ENCODE measurements at regions of chr1 and their contacts with region 1.

Region 1: DNA sequence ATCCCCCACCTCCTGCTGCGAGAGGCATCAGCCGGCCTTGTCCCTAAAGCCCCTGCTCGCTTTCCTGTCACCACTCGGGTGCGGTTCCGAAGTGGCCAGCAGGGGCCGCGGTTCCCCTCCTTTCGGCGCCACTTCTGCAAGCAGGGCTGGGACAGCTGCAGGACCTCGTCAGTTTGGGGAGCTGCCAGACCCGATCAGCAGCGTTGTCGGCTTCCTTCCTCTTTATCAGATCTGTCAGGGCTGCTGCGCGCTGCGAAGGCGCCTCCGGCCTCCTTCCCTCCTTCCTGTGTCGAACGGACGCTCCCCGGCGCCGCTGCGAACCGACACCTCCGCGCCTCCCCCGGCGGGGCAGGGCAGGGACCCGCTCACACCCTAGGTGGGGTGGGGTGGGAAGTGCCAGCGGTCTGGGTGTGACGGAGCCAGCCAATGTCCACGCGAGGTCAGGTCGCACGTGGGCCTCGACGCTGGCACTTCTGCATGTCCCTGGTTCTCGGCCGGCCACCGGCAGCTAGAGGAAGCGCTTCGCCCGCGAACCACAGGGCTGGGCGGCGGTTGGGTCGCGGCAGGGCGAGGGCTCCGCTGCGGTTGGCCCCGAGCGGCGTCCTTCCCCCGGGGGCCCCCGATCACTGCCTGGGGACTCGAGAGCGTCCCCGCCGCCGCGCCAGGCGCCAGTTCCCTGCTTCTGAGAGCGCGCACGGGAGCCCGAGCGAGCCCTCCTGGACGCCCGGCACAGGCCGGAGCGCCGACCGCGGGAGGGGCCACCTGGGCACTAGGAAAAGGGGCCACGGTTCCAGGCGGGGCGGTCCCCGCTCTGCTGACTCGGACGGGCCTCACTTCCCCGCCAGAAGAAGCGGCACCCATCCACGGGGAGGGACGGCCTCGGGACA is 81.8 kb downstream of the RUNX3 start:
- DNase-seq: peak; percentile 71
- ATAC-seq: peak; percentile 97
- H3K4me3 ChIP-seq: peak overlapping the region; percentile 56; the same call in 1 of the 2 replicates
- H3K27ac ChIP-seq: no peak overlapping the region
- H3K4me1 ChIP-seq: no peaks in the 10 kb centered on the region
- H3K27me3 ChIP-seq: no peaks in the 10 kb centered on the region
- CTCF ChIP-seq: peak; percentile 93 to 99 (median 98)
- EP300 ChIP-seq: no peak
- POLR2A ChIP-seq: peak; percentile 84
- RAD21 ChIP-seq: peak; percentile 93

Region 2: DNA sequence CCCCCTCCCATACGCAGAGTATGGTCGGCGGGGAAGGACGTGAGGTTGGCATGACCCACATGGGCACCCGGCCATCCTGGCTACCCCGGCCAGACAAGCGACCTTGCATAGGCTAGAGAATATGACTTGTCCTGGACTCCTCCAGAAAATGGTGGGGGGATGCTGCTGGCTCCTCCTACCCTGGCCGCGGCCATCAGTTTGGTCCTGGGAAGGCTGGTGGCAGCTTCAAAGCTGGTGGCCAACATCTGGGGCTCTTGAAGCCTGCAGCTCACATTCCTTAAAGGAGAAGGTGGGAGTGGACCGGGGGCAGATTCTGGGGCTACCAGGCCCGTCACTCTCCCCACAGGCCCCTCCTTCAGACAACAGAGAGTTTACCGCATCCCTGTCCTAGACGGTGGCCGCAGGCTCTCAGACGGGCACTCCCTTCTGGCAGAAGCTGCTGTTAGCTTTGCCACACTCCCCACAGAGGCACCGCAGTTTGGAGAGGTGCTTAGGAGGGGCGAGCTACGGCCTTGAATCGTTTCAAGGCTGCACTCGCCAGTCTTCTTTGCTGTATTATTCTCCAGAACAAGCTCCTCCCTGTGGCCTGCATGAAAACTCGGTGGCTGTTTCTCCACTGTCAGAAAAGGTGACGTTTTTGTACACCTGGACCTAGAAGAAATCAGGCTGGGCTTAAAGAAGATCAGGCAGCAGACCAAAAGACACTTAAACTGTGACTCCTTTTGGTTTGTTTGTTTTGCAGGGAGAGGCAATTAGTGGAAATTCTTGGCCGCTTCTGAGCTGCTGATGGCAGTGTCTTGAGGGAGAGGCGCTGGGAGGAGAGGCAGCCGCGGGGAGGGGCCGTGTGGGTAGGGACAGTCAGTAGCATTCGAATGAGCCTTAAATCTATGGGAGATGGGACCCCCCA is 13.8 kb after region 1 on chr1:
- CTCF ChIA-PET with region 1: interaction called, 15 read pairs
- POLR2A ChIA-PET with region 1: interaction called, 4 read pairs
- RAD21 ChIA-PET with region 1: interaction called, 5 read pairs
- SMC1A ChIA-PET with region 1: interaction called, 13 read pairs
- in situ Hi-C with region 1: no loop called
- intact Hi-C with region 1: no loop called
- DNase-seq: no peak
- ATAC-seq: no peak
- H3K4me3 ChIP-seq: no peak overlapping the region
- H3K27ac ChIP-seq: no peak overlapping the region
- H3K4me1 ChIP-seq: peaks cover 5% of the 10 kb centered on the region
- H3K27me3 ChIP-seq: peaks cover 0 to 3% of the 10 kb centered on the region in 2 experiments; a peak in 2 of 4 replicates
- CTCF ChIP-seq: no peak
- EP300 ChIP-seq: no peak
- POLR2A ChIP-seq: no peak
- RAD21 ChIP-seq: no peak

Region 3: GRCh38 chr1:24897767-24898483 is 49.7 kb after region 1 on chr1:
- CTCF ChIA-PET with region 1: interaction called, 133 read pairs
- POLR2A ChIA-PET with region 1: interaction called, 19 read pairs
- RAD21 ChIA-PET with region 1: interaction called, 42 read pairs
- SMC1A ChIA-PET with region 1: interaction called, 69 read pairs
- in situ Hi-C with region 1: no loop called
- intact Hi-C with region 1: loop called (anchors 2 kb)
- DNase-seq: no peak
- ATAC-seq: peak; percentile 71
- H3K4me3 ChIP-seq: no peak overlapping the region
- H3K27ac ChIP-seq: no peak overlapping the region
- H3K4me1 ChIP-seq: peaks cover 7% of the 10 kb centered on the region
- H3K27me3 ChIP-seq: no peaks in the 10 kb centered on the region
- CTCF ChIP-seq: peak; percentile 83 to 92 (median 87)
- EP300 ChIP-seq: no peak
- POLR2A ChIP-seq: peak; percentile 43; the same call in 1 of the 2 replicates
- RAD21 ChIP-seq: peak; percentile 66

Region 4: GRCh38 chr1:25031966-25032667 is 183.9 kb after region 1 on chr1:
- CTCF ChIA-PET with region 1: interaction called, 70 read pairs
- POLR2A ChIA-PET with region 1: no interaction called
- RAD21 ChIA-PET with region 1: interaction called, 13 read pairs
- SMC1A ChIA-PET with region 1: interaction called, 37 read pairs
- in situ Hi-C with region 1: loop called (anchors 5 kb)
- intact Hi-C with region 1: loop called (anchors 1 kb)
- DNase-seq: peak; percentile 94
- ATAC-seq: peak; percentile 44
- H3K4me3 ChIP-seq: peak overlapping the region; percentile 73
- H3K27ac ChIP-seq: peak overlapping the region; percentile 100
- H3K4me1 ChIP-seq: peaks cover 93% of the 10 kb centered on the region
- H3K27me3 ChIP-seq: no peaks in the 10 kb centered on the region
- CTCF ChIP-seq: peak in 1 of 3 experiments; percentile 30; a peak in 1 of 6 replicates
- EP300 ChIP-seq: peak in 1 of 2 experiments; percentile 17; a peak in 1 of 4 replicates
- POLR2A ChIP-seq: peak; percentile 66
- RAD21 ChIP-seq: peak; percentile 33; the same call in 1 of the 2 replicates

Region 5: GRCh38 chr1:25042331-25043227 is 194.3 kb after region 1 on chr1:
- CTCF ChIA-PET with region 1: interaction called, 70 read pairs
- POLR2A ChIA-PET with region 1: no interaction called
- RAD21 ChIA-PET with region 1: interaction called, 13 read pairs
- SMC1A ChIA-PET with region 1: interaction called, 37 read pairs
- in situ Hi-C with region 1: loop called (anchors 5 kb)
- intact Hi-C with region 1: loop called (anchors 1 kb)
- DNase-seq: no peak
- ATAC-seq: no peak
- H3K4me3 ChIP-seq: no peak overlapping the region
- H3K27ac ChIP-seq: no peak overlapping the region
- H3K4me1 ChIP-seq: peaks cover 17% of the 10 kb centered on the region
- H3K27me3 ChIP-seq: no peaks in the 10 kb centered on the region
- CTCF ChIP-seq: no peak
- EP300 ChIP-seq: no peak
- POLR2A ChIP-seq: no peak
- RAD21 ChIP-seq: no peak

Region 6: DNA sequence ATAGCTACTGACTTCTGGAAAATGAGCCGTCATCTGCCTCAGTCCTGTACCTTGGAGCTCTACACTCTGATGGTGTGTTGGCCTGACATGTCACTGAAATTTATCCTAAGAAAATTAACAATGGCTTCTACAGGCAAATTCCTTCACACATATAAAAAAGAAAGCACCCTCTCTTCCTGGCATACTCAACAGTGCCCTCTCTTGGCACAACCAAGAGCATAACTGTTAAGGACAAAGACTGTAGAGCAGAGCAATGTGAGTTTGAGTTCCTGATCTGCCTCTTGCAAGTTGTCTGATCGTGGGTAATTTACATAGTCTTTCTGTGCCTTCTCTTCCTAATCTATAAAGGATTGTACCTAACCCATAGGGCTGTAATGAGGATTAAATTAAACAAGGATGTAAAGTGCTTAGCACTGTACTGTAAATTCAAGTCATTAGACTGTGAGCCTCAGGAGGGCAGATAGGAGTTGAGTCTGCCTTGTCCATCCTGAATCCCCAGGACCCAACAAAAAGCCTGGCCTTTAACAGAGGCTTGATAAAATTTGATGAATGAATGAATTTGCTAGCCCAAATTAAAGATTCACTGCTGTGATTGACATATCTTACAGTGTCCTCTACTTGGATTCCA is 300.5 kb after region 1 on chr1:
- CTCF ChIA-PET with region 1: interaction called, 37 read pairs
- POLR2A ChIA-PET with region 1: no interaction called
- RAD21 ChIA-PET with region 1: interaction called, 3 read pairs
- SMC1A ChIA-PET with region 1: interaction called, 7 read pairs
- in situ Hi-C with region 1: no loop called
- intact Hi-C with region 1: no loop called
- DNase-seq: no peak
- ATAC-seq: peak; percentile 78
- H3K4me3 ChIP-seq: no peak overlapping the region
- H3K27ac ChIP-seq: no peak overlapping the region
- H3K4me1 ChIP-seq: peaks cover 12% of the 10 kb centered on the region
- H3K27me3 ChIP-seq: peaks cover 2 to 12% of the 10 kb centered on the region in 2 experiments
- CTCF ChIP-seq: peak; percentile 61 to 81 (median 67)
- EP300 ChIP-seq: no peak
- POLR2A ChIP-seq: no peak
- RAD21 ChIP-seq: peak; percentile 82

Measured in GM12878 (cell line).